Tibial artery (tissue), 4 donors: ENCODE measurements at regions of chr5 and their contacts with region 1.

Region 1: DNA sequence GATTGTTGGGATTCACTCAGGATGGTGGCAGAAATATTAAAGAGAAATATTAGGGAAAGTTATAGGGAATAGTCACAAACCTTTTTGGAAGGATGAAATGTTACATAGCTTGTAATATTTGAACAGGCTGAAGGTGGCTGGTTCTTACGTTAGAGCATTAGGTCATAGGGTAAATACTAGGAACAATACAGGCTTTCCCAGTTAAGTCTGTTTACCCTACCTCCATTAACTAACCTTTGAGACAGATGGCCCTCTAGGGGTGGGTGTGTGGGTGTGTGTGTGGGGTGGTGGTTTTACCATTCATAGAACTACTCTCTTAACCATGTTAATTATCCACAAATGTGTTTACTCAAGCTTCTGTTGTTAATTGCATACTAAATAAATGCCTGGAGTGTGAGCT is 94.3 kb upstream of the STK32A start:
- DNase-seq: no peak
- H3K4me3 ChIP-seq: no peak overlapping the region
- H3K27ac ChIP-seq: no peak overlapping the region
- H3K4me1 ChIP-seq: no peaks in the 10 kb centered on the region
- H3K27me3 ChIP-seq: no peaks in the 10 kb centered on the region
- CTCF ChIP-seq: no peak

Region 2: GRCh38 chr5:147997486-147997885 is 856.9 kb after region 1 on chr5:
- intact Hi-C with region 1: loop called (anchors 5 kb)
- DNase-seq: no peak
- H3K4me3 ChIP-seq: no peak overlapping the region
- H3K27ac ChIP-seq: no peak overlapping the region
- H3K4me1 ChIP-seq: no peaks in the 10 kb centered on the region
- H3K27me3 ChIP-seq: no peaks in the 10 kb centered on the region
- CTCF ChIP-seq: no peak